Breast epithelium (tissue), 4 donors: ENCODE measurements at regions of chr1 and their contacts with region 1.

Region 1: GRCh38 chr1:43904074-43904473 is 29.5 kb upstream of the ARTN start:
- DNase-seq: peak in 1 of 2 donors; percentile 31
- H3K4me3 ChIP-seq: no peak overlapping the region
- H3K27ac ChIP-seq: no peak overlapping the region
- H3K4me1 ChIP-seq: no peaks in the 10 kb centered on the region
- H3K27me3 ChIP-seq: no peaks in the 10 kb centered on the region
- CTCF ChIP-seq: no peak
- POLR2A ChIP-seq: no peak

Region 2: GRCh38 chr1:43035821-43036741 is 868.0 kb before region 1 on chr1:
- intact Hi-C with region 1: loop called (anchors 5 kb)
- DNase-seq: no peak
- H3K4me3 ChIP-seq: no peak overlapping the region
- H3K27ac ChIP-seq: no peak overlapping the region
- H3K4me1 ChIP-seq: no peaks in the 10 kb centered on the region
- H3K27me3 ChIP-seq: no peaks in the 10 kb centered on the region
- CTCF ChIP-seq: no peak
- POLR2A ChIP-seq: no peak

Region 3: DNA sequence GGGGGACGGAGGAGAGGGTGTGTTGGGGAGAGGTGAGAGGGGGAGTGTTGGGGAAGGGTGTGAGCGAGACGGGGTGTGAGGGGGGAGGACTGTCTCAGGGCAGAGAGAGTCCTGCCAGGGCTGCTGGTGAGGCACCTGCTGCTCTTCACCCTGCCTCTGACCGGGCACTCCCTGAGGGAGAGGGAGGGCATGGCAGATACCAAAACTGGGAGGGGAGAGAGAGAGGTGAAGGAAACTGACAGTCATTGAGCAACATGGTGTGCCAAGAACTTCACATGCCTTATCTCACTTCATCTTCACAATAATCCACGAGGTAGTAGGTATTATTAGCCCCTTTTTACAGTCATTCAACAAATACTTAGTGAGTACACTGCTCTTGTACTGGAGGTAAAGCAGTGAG is 31.8 kb before region 1 on chr1:
- intact Hi-C with region 1: loop called (anchors 1 kb)
- DNase-seq: no peak
- H3K4me3 ChIP-seq: no peak overlapping the region
- H3K27ac ChIP-seq: no peak overlapping the region
- H3K4me1 ChIP-seq: no peaks in the 10 kb centered on the region
- H3K27me3 ChIP-seq: no peaks in the 10 kb centered on the region
- CTCF ChIP-seq: no peak
- POLR2A ChIP-seq: no peak